H1 (cell line): ENCODE measurements at regions of chr2 and their contacts with region 1.

Region 1: GRCh38 chr2:20595431-20596192 is 55.3 kb downstream of the HS1BP3 start:
- DNase-seq: no peak
- H3K4me3 ChIP-seq: no peak overlapping the region
- H3K27ac ChIP-seq: no peak overlapping the region
- H3K4me1 ChIP-seq: peaks cover 4 to 10% (median 5%) of the 10 kb centered on the region in 4 experiments; a peak in 6 of 7 replicates
- H3K27me3 ChIP-seq: peaks cover 0 to 2% (median 0%) of the 10 kb centered on the region in 4 experiments; a peak in 1 of 7 replicates
- CTCF ChIP-seq: no peak
- EP300 ChIP-seq: no peak
- POLR2A ChIP-seq: no peak
- RAD21 ChIP-seq: no peak

Region 2: GRCh38 chr2:20611077-20611843 is 15.6 kb after region 1 on chr2:
- CTCF ChIA-PET with region 1: interaction called, 116 read pairs
- POLR2A ChIA-PET with region 1: interaction called, 5 read pairs
- DNase-seq: no peak
- H3K4me3 ChIP-seq: no peak overlapping the region
- H3K27ac ChIP-seq: no peak overlapping the region
- H3K4me1 ChIP-seq: peaks cover 0 to 14% (median 10%) of the 10 kb centered on the region in 4 experiments; a peak in 6 of 7 replicates
- H3K27me3 ChIP-seq: no peaks in the 10 kb centered on the region; a peak in 1 of 7 replicates
- CTCF ChIP-seq: no peak
- EP300 ChIP-seq: no peak
- POLR2A ChIP-seq: no peak
- RAD21 ChIP-seq: no peak

Region 3: DNA sequence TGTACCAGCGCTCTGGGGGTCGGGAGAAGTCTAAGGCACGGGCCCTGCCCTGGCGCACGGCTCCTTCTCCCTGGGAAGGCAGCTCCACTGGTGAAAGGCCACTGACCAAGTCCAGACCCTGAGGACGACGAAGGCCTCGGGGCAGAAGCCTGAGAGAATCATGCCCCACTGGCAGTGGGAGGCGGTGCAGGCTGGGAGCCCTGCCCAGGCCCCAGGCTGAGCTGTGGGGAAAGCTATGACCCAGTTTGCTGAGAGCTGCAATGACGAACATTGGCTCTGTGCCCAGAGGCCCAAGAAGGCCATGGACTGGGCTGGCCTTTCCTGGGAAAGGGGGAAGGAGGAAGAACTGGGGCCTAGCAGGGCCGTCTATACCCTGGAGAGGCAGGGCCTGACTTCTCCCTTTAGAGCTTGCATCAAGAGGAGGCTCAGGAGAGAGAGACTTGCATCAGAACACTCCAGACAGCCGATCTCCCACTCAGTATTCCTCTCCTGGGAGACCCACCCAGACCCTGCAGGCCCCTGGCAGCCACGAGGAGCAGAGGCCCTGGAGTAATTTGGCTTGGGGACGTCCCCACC is 22.4 kb after region 1 on chr2:
- CTCF ChIA-PET with region 1: interaction called, 116 read pairs
- POLR2A ChIA-PET with region 1: no interaction called
- DNase-seq: no peak
- H3K4me3 ChIP-seq: no peak overlapping the region
- H3K27ac ChIP-seq: no peak overlapping the region
- H3K4me1 ChIP-seq: peaks cover 0 to 20% (median 14%) of the 10 kb centered on the region in 4 experiments; a peak in 6 of 7 replicates
- H3K27me3 ChIP-seq: no peaks in the 10 kb centered on the region; a peak in 1 of 7 replicates
- CTCF ChIP-seq: peak in 2 of 3 experiments; percentile 7 to 24; a peak in 2 of 4 replicates
- EP300 ChIP-seq: no peak
- POLR2A ChIP-seq: no peak
- RAD21 ChIP-seq: peak in 1 of 2 experiments; percentile 16; a peak in 1 of 4 replicates

Region 4: GRCh38 chr2:20781656-20782265 is 186.1 kb after region 1 on chr2:
- CTCF ChIA-PET with region 1: no interaction called
- POLR2A ChIA-PET with region 1: no interaction called
- DNase-seq: peak in 1 of 2 experiments; percentile 48
- H3K4me3 ChIP-seq: no peak overlapping the region
- H3K27ac ChIP-seq: no peak overlapping the region
- H3K4me1 ChIP-seq: no peaks in the 10 kb centered on the region
- H3K27me3 ChIP-seq: no peaks in the 10 kb centered on the region
- CTCF ChIP-seq: peak; percentile 25 to 73 (median 68)
- EP300 ChIP-seq: no peak
- POLR2A ChIP-seq: no peak
- RAD21 ChIP-seq: peak; percentile 75 to 81